Prostate gland (tissue), 2 donors: ENCODE measurements at regions of chr1 and their contacts with region 1.

Region 1: GRCh38 chr1:206635080-206635977 is at the start of gene DYRK3:
- DNase-seq: peak; percentile 94
- H3K4me3 ChIP-seq: peak within 1 kb of the TSS; percentile 80 to 98
- H3K27ac ChIP-seq: peak within 1 kb of the TSS; percentile 73 to 79
- H3K4me1 ChIP-seq: peaks cover 5% of the 10 kb centered on the region
- H3K27me3 ChIP-seq: no peaks in the 10 kb centered on the region
- CTCF ChIP-seq: peak in 3 of 4 experiments; percentile 14 to 54 (median 43)
- POLR2A ChIP-seq: peak; percentile 98
- total RNA-seq, gene DYRK3: 2.6 to 9.7 TPM

Region 2: GRCh38 chr1:206556750-206557635 is 78.3 kb before region 1 on chr1:
- intact Hi-C with region 1: no loop called
- DNase-seq: peak; percentile 59
- H3K4me3 ChIP-seq: peak overlapping the region; percentile 45 to 48
- H3K27ac ChIP-seq: peak overlapping the region; percentile 69 to 72
- H3K4me1 ChIP-seq: no peaks in the 10 kb centered on the region
- H3K27me3 ChIP-seq: no peaks in the 10 kb centered on the region
- CTCF ChIP-seq: peak in 1 of 4 experiments; percentile 13
- POLR2A ChIP-seq: peak; percentile 33

Region 3: GRCh38 chr1:206579747-206580437 is 55.4 kb before region 1 on chr1:
- intact Hi-C with region 1: no loop called
- DNase-seq: no peak
- H3K4me3 ChIP-seq: no peak overlapping the region
- H3K27ac ChIP-seq: no peak overlapping the region
- H3K4me1 ChIP-seq: no peaks in the 10 kb centered on the region
- H3K27me3 ChIP-seq: no peaks in the 10 kb centered on the region
- CTCF ChIP-seq: no peak
- POLR2A ChIP-seq: no peak

Region 4: DNA sequence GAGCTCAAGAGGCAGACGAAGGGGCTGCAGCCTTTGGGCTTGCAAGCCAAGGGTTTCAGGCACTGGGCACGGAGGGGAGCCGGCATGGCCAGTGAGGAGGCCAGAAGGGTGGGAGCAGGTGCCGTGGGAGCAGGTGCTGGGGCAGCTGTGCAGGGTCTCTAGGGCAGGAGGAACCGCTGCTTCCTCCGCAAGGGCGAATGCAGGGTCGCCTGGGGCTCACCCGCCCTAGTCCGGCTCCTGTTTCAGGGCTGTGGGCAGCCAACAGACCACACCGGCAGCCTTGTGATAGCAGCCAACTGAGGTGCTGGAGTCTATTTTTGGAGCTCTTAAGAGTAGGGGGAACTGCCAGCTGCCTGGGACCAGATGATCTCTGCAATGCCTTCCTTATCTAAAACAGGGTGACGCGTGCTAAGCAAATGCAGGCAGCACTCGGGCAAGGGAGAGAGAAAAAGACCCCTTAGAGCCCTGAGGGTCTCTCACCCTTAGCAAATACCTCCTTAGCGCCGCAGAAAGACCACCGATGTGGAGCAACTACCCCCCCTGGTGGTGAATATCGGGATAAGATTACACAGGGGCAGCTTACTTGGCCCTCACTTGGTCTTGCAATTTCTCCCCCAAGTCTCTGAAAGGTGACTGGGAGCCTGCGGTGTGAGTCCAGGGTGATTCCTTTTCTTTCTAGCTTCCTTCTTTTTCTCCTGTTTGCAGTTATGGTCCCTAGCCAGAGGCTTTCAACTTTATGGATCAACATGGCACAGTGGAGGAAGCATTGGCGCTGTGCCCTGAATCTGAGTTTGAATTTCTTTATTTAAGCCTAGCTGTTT is 28.7 kb after region 1 on chr1:
- intact Hi-C with region 1: loop called (anchors 2 kb)
- DNase-seq: peak; percentile 61
- H3K4me3 ChIP-seq: no peak overlapping the region
- H3K27ac ChIP-seq: no peak overlapping the region
- H3K4me1 ChIP-seq: no peaks in the 10 kb centered on the region
- H3K27me3 ChIP-seq: no peaks in the 10 kb centered on the region
- CTCF ChIP-seq: peak; percentile 76 to 95 (median 88)
- POLR2A ChIP-seq: no peak

Region 5: GRCh38 chr1:206716870-206717673 is 81.7 kb after region 1 on chr1:
- intact Hi-C with region 1: loop called (anchors 10 kb)
- DNase-seq: no peak
- H3K4me3 ChIP-seq: no peak overlapping the region
- H3K27ac ChIP-seq: no peak overlapping the region
- H3K4me1 ChIP-seq: peaks cover 9% of the 10 kb centered on the region
- H3K27me3 ChIP-seq: no peaks in the 10 kb centered on the region
- CTCF ChIP-seq: no peak
- POLR2A ChIP-seq: no peak

Region 6: DNA sequence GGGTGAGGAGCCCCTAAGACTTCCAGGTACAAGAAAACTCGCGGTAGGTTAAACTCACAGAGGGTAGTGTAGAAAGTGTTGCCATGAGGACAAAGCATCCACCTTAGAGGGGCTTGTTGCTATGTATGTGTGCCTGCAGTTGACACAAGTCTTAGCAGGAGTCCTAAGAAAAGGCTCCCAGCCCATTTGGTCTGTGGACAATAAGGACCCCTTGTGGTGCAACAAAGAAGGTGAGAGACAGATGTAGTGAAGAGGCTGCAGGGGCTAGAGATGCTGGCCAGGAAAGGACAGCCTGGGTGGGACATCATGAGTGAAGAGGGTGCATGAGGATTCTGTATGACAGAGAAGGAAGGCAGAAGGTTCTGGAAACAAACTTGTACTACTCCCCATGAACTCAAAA is 173.3 kb after region 1 on chr1:
- intact Hi-C with region 1: loop called (anchors 10 kb)
- DNase-seq: no peak
- H3K4me3 ChIP-seq: no peak overlapping the region
- H3K27ac ChIP-seq: no peak overlapping the region
- H3K4me1 ChIP-seq: no peaks in the 10 kb centered on the region
- H3K27me3 ChIP-seq: no peaks in the 10 kb centered on the region
- CTCF ChIP-seq: peak in 2 of 4 experiments; percentile 27 to 31
- POLR2A ChIP-seq: no peak

Region 7: GRCh38 chr1:206912445-206913095 is 277.2 kb after region 1 on chr1:
- intact Hi-C with region 1: loop called (anchors 2 kb)
- DNase-seq: peak; percentile 78
- H3K4me3 ChIP-seq: no peak overlapping the region
- H3K27ac ChIP-seq: no peak overlapping the region
- H3K4me1 ChIP-seq: no peaks in the 10 kb centered on the region
- H3K27me3 ChIP-seq: no peaks in the 10 kb centered on the region
- CTCF ChIP-seq: peak; percentile 85 to 92 (median 90)
- POLR2A ChIP-seq: no peak

Region 8: GRCh38 chr1:206982216-206982615 is 346.9 kb after region 1 on chr1:
- intact Hi-C with region 1: loop called (anchors 2 kb)
- DNase-seq: peak; percentile 60
- H3K4me3 ChIP-seq: no peak overlapping the region
- H3K27ac ChIP-seq: no peak overlapping the region
- H3K4me1 ChIP-seq: no peaks in the 10 kb centered on the region
- H3K27me3 ChIP-seq: no peaks in the 10 kb centered on the region
- CTCF ChIP-seq: peak; percentile 13 to 79 (median 66)
- POLR2A ChIP-seq: no peak